ENCODE measurements at regions of chr2 and their contacts with region 1.

Region 1: GRCh38 chr2:39379643-39380524 is 57.2 kb downstream of the MAP4K3 start:
- DNase-seq: no peak
- H3K4me3 Mint-ChIP-seq: no peak overlapping the region
- H3K27ac Mint-ChIP-seq: no peak overlapping the region
- H3K4me1 Mint-ChIP-seq: peaks cover 31% of the 10 kb centered on the region
- H3K27me3 Mint-ChIP-seq: no peaks in the 10 kb centered on the region

Region 2: DNA sequence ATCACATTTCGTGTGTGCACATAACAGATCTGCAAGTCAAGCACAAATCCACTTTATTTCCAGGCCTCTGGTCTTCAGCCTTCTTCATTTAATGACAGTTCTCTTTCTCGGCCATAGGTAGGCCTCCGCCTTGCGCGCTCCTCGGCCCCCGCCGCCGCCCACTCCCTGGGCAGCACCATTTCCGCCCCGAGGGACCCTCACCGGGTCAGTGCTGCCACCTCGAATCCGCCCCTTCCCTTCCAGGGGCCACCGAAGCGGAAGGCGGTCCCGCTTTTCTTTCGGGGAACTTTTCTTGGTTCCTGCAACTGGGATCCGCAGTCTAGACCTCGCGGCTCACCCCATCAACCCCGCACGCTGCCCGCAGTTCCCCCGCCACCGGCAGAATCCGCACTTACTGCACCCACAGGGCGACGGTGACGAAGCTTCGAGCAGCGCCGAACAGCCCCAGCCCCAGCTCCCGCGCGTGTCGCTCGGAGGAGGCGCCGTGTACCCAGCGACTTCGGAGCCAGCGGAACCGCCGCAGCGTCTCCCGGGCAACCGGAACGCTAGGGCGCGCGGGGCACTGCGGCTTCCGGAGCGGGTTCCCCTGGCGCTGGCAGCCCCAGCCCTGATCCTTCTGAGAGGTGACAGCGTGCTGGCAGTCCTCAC is 136.3 kb before region 1 on chr2 and contains the start of gene CDKL4:
- intact Hi-C with region 1: loop called (anchors 10 kb)
- DNase-seq: peak; percentile 29
- H3K4me3 Mint-ChIP-seq: peak within 1 kb of the TSS; percentile 78
- H3K27ac Mint-ChIP-seq: peak within 1 kb of the TSS; percentile 58
- H3K4me1 Mint-ChIP-seq: peaks cover 32% of the 10 kb centered on the region
- H3K27me3 Mint-ChIP-seq: peaks cover 2% of the 10 kb centered on the region
- total RNA-seq, gene CDKL4: 0.11 and 1.3 TPM in 2 replicates

Region 3: GRCh38 chr2:39325966-39326365 is 53.9 kb before region 1 on chr2:
- intact Hi-C with region 1: no loop called
- DNase-seq: no peak
- H3K4me3 Mint-ChIP-seq: no peak overlapping the region
- H3K27ac Mint-ChIP-seq: no peak overlapping the region
- H3K4me1 Mint-ChIP-seq: peaks cover 6% of the 10 kb centered on the region
- H3K27me3 Mint-ChIP-seq: no peaks in the 10 kb centered on the region

Region 4: DNA sequence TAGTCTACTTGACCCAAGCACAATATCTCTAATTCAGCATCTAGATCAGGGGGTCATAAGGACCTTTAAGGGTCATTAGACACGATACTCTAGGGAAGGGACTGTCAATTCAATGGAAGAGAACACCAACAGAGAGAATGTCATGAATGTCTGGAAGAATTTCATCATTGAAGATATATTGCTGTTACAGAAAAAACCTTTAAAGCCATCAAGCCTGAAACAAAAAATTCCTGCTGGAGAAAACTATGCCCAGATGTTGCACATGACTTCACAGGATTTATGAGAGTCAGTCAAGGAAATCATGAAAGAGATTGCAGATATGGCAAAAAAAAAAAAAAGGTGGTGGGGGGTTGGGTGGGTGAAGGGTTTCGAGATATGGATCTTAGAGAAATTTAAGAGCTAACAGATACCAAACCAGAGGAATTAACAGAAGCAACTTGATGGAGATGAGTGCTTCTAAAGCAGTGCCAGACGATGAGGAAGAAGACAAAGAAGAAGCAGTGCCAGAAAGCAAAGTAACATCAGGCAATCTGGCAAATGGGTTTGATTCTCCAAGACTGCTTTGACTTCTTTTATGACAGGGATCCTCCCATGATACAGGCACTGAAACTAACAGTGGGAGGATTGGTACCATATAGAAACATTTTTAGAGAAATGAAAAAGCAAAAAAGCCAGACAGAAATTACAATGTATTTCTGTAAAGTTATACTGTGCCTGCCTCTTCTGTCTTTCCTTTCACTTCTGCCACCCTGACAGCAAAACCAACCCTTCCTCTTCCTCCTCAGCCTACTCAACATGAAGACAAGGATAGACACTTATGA is 28.6 kb after region 1 on chr2:
- intact Hi-C with region 1: loop called (anchors 2 kb)
- DNase-seq: no peak
- H3K4me3 Mint-ChIP-seq: no peak overlapping the region
- H3K27ac Mint-ChIP-seq: peak overlapping the region; percentile 49
- H3K4me1 Mint-ChIP-seq: peaks cover 45% of the 10 kb centered on the region
- H3K27me3 Mint-ChIP-seq: no peaks in the 10 kb centered on the region

Region 5: DNA sequence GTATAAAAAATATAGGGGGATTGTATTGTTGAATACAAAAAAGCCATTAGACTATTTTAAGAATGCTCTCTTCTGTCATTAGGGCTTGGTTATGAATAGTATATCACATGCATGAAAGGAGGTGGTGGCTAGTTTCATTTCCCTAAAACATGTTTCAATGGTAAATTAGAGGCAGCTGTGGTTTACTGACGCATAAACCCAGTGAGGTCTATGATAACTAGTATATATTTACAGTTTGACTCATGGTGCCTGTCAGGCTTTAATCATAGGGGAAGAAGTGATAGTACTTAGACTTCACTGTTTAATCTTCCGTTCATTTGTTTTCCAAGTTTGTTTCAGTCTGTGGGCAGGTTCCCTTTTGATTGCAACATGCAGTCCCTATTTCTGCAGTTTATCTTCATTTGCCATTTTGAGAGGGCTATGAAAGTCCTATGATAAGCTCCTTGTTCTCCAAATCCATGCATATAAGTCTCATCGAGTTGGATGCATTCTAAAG is 112.3 kb after region 1 on chr2:
- intact Hi-C with region 1: loop called (anchors 1 kb)
- DNase-seq: peak; percentile 20
- H3K4me3 Mint-ChIP-seq: peak overlapping the region; percentile 54
- H3K27ac Mint-ChIP-seq: peak overlapping the region; percentile 85
- H3K4me1 Mint-ChIP-seq: peaks cover 51% of the 10 kb centered on the region
- H3K27me3 Mint-ChIP-seq: peaks cover 9% of the 10 kb centered on the region

Region 6: DNA sequence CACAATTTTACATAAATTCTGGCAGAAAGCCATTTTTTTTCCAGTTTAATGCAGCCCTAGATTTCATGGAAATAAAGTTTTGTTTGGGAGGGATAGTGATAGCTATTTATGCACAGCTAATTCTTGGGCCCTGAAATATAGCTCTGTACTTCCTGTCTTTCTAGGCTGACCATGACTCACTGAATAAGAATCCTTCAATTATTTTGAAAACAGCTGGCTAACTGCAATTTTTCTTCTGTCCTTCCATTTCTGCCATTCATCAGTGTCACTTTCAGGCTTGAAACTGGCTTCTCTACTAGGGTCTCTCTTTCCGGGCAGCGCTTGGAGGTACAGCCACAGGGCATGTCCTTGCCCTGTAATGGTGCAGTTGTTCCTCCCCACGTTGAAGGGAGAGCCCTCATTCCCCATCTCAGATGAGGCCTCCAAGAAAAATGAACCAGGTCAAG is 188.7 kb after region 1 on chr2:
- intact Hi-C with region 1: no loop called
- DNase-seq: no peak
- H3K4me3 Mint-ChIP-seq: no peak overlapping the region
- H3K27ac Mint-ChIP-seq: no peak overlapping the region
- H3K4me1 Mint-ChIP-seq: no peaks in the 10 kb centered on the region
- H3K27me3 Mint-ChIP-seq: peaks cover 1% of the 10 kb centered on the region

Region 7: GRCh38 chr2:39728941-39729351 is 349.1 kb after region 1 on chr2:
- intact Hi-C with region 1: loop called (anchors 2 kb)
- DNase-seq: no peak
- H3K4me3 Mint-ChIP-seq: no peak overlapping the region
- H3K27ac Mint-ChIP-seq: no peak overlapping the region
- H3K4me1 Mint-ChIP-seq: peaks cover 6% of the 10 kb centered on the region
- H3K27me3 Mint-ChIP-seq: no peaks in the 10 kb centered on the region

Region 8: GRCh38 chr2:39948016-39948719 is 568.3 kb after region 1 on chr2:
- intact Hi-C with region 1: loop called (anchors 1 kb)
- DNase-seq: no peak
- H3K4me3 Mint-ChIP-seq: peak overlapping the region; percentile 5
- H3K27ac Mint-ChIP-seq: peak overlapping the region; percentile 93
- H3K4me1 Mint-ChIP-seq: peaks cover 54% of the 10 kb centered on the region
- H3K27me3 Mint-ChIP-seq: no peaks in the 10 kb centered on the region

Measured in activated T-helper 2 cell treated with anti-CD3 and anti-CD28 coated beads, Interferon-gamma antibody, Interleukin-2, Interleukin-4, amounts not matched to agents 10 μg/mL and 5 μg/mL and 100 μg/mL, durations not matched to agents 14 hours and 24 hours and 36 hours (primary cell).